ENCODE measurements at regions of chr20 and their contacts with region 1.

Region 1: GRCh38 chr20:49237531-49237930 is 18.3 kb downstream of the DDX27 start:
- DNase-seq: no peak
- ATAC-seq: no peak
- H3K4me3 Mint-ChIP-seq: no peak overlapping the region
- H3K27ac Mint-ChIP-seq: no peak overlapping the region
- H3K4me1 Mint-ChIP-seq: no peaks in the 10 kb centered on the region
- H3K27me3 Mint-ChIP-seq: no peaks in the 10 kb centered on the region
- CTCF ChIP-seq: no peak

Region 2: GRCh38 chr20:49054056-49054643 is 183.4 kb before region 1 on chr20:
- CTCF ChIA-PET with region 1: no interaction called
- POLR2A ChIA-PET with region 1: interaction called, 11 read pairs
- DNase-seq: no peak
- ATAC-seq: no peak
- H3K4me3 Mint-ChIP-seq: no peak overlapping the region
- H3K27ac Mint-ChIP-seq: peak overlapping the region; percentile 56
- H3K4me1 Mint-ChIP-seq: peaks cover 45% of the 10 kb centered on the region
- H3K27me3 Mint-ChIP-seq: no peaks in the 10 kb centered on the region
- CTCF ChIP-seq: no peak

Region 3: DNA sequence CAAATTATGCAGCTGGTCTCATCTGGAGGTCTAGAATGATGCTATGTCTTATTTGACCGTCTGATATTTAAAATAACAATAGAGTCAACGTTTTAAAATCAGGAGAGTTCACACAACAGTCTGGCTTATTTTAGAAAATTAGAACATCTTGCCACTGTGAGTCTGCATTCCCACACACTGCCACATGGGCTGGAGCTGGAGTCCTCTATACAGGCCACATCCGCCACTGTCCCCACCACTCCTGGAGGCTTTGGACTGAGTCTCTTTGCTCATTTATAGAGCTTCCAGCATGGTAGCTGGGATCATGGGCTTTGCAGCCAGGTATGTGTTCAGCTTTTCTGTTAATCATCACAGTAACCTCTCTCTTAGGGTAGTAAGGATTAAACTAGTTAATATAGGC is 109.2 kb after region 1 on chr20:
- CTCF ChIA-PET with region 1: no interaction called
- POLR2A ChIA-PET with region 1: no interaction called
- DNase-seq: no peak
- ATAC-seq: peak; percentile 30; the same call in 1 of the 2 replicates
- H3K4me3 Mint-ChIP-seq: no peak overlapping the region
- H3K27ac Mint-ChIP-seq: no peak overlapping the region
- H3K4me1 Mint-ChIP-seq: peaks cover 5% of the 10 kb centered on the region
- H3K27me3 Mint-ChIP-seq: no peaks in the 10 kb centered on the region
- CTCF ChIP-seq: no peak

Measured in WTC11 (cell line).